ENCODE measurements at regions of chr9 and their contacts with region 1.

Region 1: DNA sequence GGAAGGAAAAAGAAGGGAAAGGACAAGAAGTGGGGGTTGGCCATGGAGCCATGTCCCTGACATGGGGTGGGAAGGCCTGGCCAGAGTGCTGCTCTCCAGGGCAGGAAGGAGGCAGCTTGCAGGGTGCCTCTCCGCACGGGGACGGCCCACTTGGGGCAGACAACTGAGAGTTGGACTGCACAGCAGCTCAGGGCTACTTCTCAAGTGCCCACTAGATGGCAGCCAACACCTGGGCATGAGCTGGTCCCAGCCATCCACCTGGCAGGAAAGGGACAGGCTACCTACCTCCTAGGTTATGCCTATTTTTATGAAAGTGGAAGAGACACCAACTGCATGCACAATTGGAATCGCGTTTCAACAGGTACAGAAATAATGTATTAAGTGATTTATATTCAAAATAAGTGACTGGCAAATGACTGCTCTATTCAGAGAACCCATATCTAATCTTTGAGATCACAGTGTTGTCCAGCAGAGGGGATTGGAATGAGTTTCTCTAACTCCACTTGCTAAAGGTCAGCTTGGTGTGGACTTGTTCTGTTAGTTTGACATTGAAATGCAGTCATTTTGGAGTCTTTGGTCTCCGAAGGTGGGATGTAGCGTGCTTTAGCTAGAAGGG is 113.4 kb downstream of the SYK start:
- DNase-seq: peak; percentile 81
- ATAC-seq: peak; percentile 79

Region 2: GRCh38 chr9:90579181-90579580 is 335.8 kb before region 1 on chr9:
- intact Hi-C with region 1: no loop called
- DNase-seq: no peak
- ATAC-seq: no peak

Region 3: DNA sequence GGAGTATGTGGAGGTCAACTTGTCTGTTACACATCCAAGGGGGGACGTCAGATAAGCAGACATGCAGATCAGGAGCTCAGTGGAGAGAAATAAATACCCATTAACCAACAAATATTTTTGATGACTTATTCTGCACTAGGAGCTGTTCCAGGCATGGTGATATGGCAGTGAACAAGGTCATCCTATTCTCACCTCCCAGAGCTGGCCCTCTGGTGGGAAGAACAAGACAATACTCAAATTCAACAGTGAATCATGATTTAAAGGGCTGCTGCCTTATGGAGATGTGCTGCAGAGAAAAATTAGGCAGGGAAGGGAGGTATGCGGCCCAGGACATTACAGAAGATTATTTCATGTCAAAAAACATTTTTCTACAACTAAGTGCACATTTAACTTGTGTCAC is 76.9 kb before region 1 on chr9:
- intact Hi-C with region 1: no loop called
- DNase-seq: no peak
- ATAC-seq: no peak

Region 4: GRCh38 chr9:91433180-91433579 is 518.2 kb after region 1 on chr9:
- intact Hi-C with region 1: loop called (anchors 2 kb)
- DNase-seq: no peak
- ATAC-seq: peak; percentile 57

Region 5: DNA sequence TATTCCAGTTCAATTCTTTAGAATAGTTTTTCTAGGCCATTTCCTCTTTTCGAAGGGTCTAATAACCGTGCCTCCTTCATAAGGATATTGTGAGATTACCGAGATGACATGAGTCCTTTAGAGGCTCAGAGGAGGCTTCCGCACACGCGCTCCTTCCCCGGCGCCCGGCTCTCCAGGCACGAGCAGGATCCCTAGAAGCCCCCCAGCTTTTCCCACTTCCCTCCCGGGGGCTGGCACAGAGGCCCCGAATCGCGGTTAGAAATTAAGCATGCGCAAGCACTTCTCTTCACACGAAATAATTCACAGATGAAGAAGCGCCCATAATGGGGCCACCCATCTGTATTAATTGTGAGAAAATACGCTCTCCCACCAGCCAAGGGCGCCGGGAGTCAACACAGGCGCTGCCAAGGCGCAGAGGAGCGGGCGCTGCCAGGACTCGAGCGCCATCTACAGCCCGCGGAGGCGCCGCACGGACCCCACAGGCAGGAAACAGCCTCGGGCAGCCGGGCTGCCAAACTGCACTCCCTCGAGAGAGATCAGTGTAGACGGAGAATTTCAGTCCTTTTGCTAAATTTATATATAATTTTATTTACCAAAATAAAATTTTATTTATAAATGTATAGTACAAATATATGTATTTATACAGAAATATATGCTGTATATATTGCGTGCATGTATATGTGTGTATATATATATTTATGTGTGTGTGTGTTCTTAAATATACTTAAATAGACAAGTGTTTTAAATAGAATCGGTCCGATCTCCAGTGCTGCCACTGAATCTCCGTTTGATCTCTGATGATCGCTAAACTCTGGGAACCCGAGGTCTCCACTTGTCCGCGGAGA is 766.7 kb after region 1 on chr9:
- intact Hi-C with region 1: loop called (anchors 1 kb)
- DNase-seq: peak; percentile 90
- ATAC-seq: peak; percentile 88

Region 6: DNA sequence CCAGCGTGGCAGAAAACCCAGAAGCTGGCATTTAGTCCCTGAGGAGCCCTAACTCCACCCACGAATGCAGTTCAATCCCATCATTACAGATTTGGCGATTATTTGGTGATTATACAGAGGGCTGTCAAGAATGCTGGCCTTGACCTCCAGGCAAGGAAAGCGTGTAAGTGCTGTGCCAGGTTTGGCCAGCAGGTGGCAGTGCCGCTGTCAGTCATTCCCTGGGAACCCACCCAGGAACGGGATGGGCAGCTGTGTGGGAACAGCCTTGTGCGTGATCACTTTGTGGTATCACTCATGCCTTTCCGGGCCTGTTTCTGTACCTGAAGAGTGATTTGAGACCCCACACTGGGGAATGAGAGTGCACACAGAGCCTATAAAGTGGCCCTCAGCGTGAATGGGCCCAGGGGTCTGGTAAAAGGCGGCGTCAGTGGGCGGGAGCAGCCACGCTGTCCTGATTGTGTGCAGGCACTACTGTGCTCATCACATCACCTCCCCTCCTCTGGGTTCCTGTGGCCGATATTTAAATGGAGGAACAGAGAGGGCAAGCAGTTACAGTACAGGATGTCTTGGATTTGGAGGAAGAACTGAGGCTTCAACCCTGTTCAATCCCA is 819.5 kb after region 1 on chr9:
- intact Hi-C with region 1: loop called (anchors 5 kb)
- DNase-seq: peak; percentile 86
- ATAC-seq: peak; percentile 61

Measured in Right ventricle myocardium inferior (tissue), 1 donor.